ENCODE measurements at regions of chr6 and their contacts with region 1.

Region 1: DNA sequence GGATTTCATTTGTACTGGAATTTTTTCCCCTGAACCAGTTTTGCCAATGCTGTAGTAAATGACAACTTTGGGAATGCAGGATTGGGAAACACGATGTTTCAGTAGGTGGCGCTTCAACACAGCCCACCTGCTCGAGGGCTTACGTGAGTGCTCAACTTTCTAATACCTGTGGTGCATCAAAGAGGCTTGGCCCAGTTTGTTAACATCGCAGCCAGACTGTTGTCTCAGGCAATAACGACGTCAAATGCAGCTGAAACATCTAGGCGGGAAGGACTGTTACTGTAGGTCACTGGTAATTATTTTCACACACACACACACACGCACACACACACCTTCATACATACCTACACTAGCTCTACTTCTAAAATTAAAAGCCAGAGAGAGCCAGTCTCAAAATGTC is 815.5 kb upstream of the SLC35B3 start:
- DNase-seq: peak; percentile 61
- H3K4me3 ChIP-seq: no peak overlapping the region
- H3K27ac ChIP-seq: no peak overlapping the region
- H3K4me1 ChIP-seq: no peaks in the 10 kb centered on the region
- H3K27me3 ChIP-seq: no peaks in the 10 kb centered on the region
- CTCF ChIP-seq: peak; percentile 72 to 85

Region 2: DNA sequence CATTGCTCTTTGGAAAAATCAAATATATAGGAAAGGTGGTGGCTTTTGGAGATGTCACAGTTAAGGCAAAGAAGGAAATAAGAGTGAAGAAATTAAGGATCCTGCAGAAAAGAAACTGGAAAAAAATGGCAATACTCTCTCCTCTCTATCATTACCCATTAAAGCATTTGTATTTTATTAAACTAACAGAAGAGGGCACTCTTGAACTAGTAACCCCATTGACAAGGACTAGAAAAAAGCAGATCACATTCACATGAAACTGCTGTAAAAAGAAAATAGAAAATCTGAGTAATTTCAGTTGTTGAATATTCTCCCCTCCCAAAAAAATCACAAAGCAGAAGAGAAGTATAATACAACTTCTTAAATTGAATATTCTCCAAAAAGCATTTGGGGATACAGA is 711.4 kb before region 1 on chr6:
- CTCF ChIA-PET with region 1: no interaction called
- dilution Hi-C with region 1: no loop called
- in situ Hi-C with region 1: no loop called
- intact Hi-C with region 1: loop called (anchors 1 kb)
- DNase-seq: peak; percentile 33
- H3K4me3 ChIP-seq: no peak overlapping the region
- H3K27ac ChIP-seq: no peak overlapping the region
- H3K4me1 ChIP-seq: no peaks in the 10 kb centered on the region
- H3K27me3 ChIP-seq: no peaks in the 10 kb centered on the region
- CTCF ChIP-seq: peak; percentile 24 to 51

Region 3: DNA sequence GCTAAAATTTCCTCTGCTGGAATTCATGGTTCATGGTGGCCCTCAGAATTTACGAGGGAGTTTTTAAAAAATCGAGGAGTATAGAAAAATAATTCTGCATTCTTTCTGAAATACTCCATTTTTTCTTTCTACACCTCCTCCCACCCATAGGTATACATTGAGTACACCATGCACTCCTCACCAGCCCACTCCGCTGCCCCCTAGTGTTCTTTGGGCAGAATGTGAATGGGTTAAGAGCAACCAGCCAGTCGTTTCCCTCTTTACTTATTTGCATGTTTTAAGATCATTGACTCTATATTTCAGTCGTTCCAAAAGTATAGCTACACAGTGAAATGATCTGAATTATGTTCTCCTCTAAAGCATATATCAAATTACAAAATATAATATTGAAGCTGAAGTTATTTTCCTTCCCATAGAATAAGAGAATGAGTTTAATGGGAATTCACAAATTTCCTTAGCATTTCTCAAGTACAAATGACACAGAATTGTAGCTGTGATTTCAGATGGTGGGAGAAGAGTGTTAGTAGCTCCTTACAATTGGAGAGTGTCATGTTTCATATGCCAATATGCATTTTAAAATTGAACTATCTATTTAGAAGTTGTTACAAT is 162.2 kb after region 1 on chr6:
- CTCF ChIA-PET with region 1: no interaction called
- dilution Hi-C with region 1: no loop called
- in situ Hi-C with region 1: no loop called
- intact Hi-C with region 1: loop called (anchors 2 kb)
- DNase-seq: peak; percentile 19
- H3K4me3 ChIP-seq: no peak overlapping the region
- H3K27ac ChIP-seq: no peak overlapping the region
- H3K4me1 ChIP-seq: no peaks in the 10 kb centered on the region
- H3K27me3 ChIP-seq: no peaks in the 10 kb centered on the region
- CTCF ChIP-seq: peak; percentile 69 to 72

Region 4: GRCh38 chr6:9851541-9852380 is 600.9 kb after region 1 on chr6:
- CTCF ChIA-PET with region 1: no interaction called
- dilution Hi-C with region 1: no loop called
- in situ Hi-C with region 1: no loop called
- intact Hi-C with region 1: loop called (anchors 1 kb)
- DNase-seq: peak; percentile 76
- H3K4me3 ChIP-seq: no peak overlapping the region
- H3K27ac ChIP-seq: peak overlapping the region; percentile 20
- H3K4me1 ChIP-seq: peaks cover 9% of the 10 kb centered on the region
- H3K27me3 ChIP-seq: no peaks in the 10 kb centered on the region
- CTCF ChIP-seq: peak; percentile 66 to 69

Region 5: DNA sequence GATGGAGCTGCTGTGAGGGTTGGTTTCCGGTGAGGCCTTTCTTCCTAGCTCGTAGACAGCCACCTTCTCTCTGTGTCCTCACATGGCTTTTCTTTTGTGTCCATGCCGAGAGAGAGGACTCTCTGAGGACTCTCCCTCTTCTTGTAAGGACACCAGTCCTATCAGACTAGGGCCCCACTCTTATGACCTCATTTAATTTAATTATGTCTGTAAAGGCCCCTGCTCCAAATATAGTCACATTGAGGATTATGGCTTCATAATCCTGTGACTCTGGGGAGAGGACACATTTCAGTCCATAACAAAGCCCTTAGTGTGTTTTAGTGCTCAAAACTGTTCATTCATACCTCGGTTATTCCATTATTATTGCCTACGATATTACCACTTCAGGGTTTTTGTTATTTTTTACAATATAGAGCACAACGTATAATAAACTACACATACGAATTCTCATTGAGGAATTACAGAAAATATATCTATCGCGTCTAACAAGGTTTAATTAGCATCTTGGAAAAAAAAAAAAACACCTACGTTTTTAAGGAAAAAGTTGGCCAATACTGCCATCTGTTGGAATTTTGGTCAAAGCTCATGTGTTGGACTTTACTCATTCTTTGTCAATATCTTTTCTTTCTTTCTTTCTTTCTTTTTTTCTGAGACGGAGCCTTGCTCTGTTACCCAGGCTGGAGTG is 1184.0 kb after region 1 on chr6:
- CTCF ChIA-PET with region 1: no interaction called
- dilution Hi-C with region 1: no loop called
- in situ Hi-C with region 1: loop called (anchors 10 to 25 kb)
- intact Hi-C with region 1: loop called (anchors 1 kb)
- DNase-seq: peak; percentile 49
- H3K4me3 ChIP-seq: peak overlapping the region; percentile 15 to 31 (median 19)
- H3K27ac ChIP-seq: peak overlapping the region; percentile 91
- H3K4me1 ChIP-seq: peaks cover 48% of the 10 kb centered on the region
- H3K27me3 ChIP-seq: no peaks in the 10 kb centered on the region
- CTCF ChIP-seq: peak; percentile 54 to 60

Measured in mammary epithelial cell (primary cell).